GM10248 (cell line): ENCODE measurements at regions of chr15 and their contacts with region 1.

Region 1: GRCh38 chr15:99076552-99077308 is 28.1 kb upstream of the SYNM start:
- DNase-seq: peak; percentile 68
- CTCF ChIP-seq: peak; percentile 81

Region 2: DNA sequence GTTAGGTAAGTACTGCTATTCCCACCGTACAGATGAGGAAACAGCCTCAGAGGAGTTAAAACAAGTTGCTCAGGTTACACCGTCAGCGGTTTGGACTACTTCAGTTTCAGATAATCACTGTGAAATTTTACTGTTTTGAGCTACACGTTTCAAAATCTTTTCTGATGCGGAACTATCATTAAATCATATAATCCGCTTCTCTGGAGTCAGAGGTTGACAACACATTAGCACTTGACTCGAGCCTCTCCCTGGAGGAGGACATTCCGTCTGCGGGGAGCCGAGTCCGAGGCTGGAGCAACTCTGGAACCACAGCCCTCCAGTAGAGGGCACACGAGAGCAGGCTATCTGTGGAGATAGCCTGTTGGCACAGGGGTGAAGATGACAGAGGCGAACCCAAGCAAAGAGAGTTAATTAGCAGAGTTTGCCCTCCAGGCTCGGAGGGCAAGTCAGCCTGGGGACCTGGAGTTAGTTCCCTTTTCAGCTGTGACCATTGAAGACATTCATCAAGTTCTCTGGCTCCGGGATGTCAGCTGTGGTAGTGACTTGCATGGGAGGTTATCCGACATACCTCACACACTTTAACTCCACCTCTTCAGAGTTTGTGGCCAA is 297.2 kb before region 1 on chr15:
- CTCF ChIA-PET with region 1: interaction called, 45 read pairs
- POLR2A ChIA-PET with region 1: no interaction called
- DNase-seq: peak; percentile 72
- CTCF ChIP-seq: peak; percentile 96

Region 3: DNA sequence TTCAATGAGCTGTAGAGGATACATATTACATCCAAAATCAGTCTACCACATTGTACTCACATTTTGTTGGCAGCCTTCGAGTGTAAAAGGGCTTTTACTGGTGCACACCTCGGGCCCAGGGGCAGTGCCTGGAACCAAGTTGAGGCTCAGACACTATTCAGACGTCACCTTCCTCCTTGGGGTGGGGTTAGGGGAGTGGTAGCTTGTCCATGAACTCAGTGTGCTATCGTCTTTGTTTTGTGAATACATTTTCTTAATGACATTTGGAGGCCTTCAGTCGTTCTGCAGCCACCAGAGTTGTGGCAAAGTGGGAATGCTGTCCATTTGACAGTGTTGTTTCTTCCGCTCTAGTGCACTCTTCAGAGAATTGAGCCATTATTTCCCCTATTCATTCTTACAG is 183.3 kb before region 1 on chr15:
- CTCF ChIA-PET with region 1: no interaction called
- POLR2A ChIA-PET with region 1: no interaction called
- DNase-seq: no peak
- CTCF ChIP-seq: no peak

Region 4: GRCh38 chr15:98958918-98959639 is 117.7 kb before region 1 on chr15:
- CTCF ChIA-PET with region 1: no interaction called
- POLR2A ChIA-PET with region 1: no interaction called
- DNase-seq: no peak
- CTCF ChIP-seq: no peak

Region 5: GRCh38 chr15:99090011-99090699 is 13.4 kb after region 1 on chr15:
- CTCF ChIA-PET with region 1: interaction called, 82 read pairs
- POLR2A ChIA-PET with region 1: no interaction called
- DNase-seq: peak; percentile 78
- CTCF ChIP-seq: no peak

Region 6: GRCh38 chr15:99110581-99111320 is 34.0 kb after region 1 on chr15:
- CTCF ChIA-PET with region 1: interaction called, 12 read pairs
- POLR2A ChIA-PET with region 1: no interaction called
- DNase-seq: no peak
- CTCF ChIP-seq: no peak